PC-3 (cell line): ENCODE measurements at regions of chr3 and their contacts with region 1.

Region 1: DNA sequence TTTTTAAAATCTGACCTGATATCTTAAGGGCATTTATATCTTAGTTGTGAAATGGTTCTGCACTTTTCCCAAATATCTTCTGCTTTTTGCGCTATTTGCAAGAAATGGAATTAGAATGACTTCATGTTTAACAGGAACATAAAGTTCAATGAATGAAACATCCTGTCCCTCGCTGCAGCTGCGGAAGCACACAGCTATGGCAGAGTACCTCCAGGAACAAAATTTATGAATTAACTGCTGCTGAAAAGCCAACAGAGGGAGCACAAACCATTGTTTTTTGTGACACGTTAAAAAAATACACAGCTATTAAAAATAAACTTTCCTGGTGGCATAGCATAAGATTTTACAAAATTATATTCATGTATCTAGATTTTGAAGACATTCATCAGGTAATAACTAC is 404.4 kb upstream of the MDFIC2 start:
- DNase-seq: peak; percentile 55
- ATAC-seq: peak; percentile 88
- H3K4me3 ChIP-seq: no peak overlapping the region
- H3K27ac ChIP-seq: no peak overlapping the region
- H3K4me1 ChIP-seq: no peaks in the 10 kb centered on the region
- H3K27me3 ChIP-seq: no peaks in the 10 kb centered on the region
- CTCF ChIP-seq: peak; percentile 75

Region 2: DNA sequence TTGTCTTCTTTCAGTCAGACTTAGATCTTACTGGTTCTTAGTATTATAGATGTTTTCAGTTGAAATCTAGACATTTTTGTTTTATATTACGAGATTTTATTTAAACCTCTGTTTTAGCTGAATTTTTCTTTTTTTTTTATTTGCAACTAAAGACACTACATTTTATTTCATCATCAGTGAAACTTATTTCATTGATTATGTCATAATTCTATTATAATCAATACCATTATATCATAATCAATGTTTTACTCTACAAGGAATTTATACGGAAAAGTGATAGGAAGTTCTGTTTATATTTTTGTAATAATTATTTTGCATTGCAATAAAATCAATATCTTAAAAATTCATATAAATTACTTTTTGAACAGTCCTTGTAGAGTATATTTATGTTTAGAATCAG is 73.1 kb after region 1 on chr3:
- CTCF ChIA-PET with region 1: no interaction called
- POLR2A ChIA-PET with region 1: no interaction called
- intact Hi-C with region 1: no loop called
- DNase-seq: no peak
- ATAC-seq: no peak
- H3K4me3 ChIP-seq: no peak overlapping the region
- H3K27ac ChIP-seq: no peak overlapping the region
- H3K4me1 ChIP-seq: no peaks in the 10 kb centered on the region
- H3K27me3 ChIP-seq: no peaks in the 10 kb centered on the region
- CTCF ChIP-seq: no peak

Region 3: DNA sequence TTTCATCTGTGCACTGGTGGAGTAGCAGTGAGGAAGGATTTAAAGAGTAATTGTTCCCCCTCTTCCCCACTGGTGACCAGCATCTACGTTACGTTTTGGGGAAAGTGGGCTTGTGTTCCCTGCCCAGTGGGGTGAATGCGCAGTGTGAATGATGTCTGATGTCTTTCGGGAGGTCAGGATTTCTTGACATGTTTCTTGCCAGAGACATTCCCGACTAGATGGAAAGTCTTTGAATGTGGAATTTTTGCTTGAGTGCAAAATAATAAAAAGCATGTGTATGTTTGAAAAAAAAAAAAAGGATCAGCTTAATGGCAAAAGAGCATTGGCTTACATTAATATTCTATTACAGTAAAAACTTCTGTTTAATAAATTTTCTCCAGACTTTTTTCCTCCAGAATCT is 234.5 kb after region 1 on chr3:
- CTCF ChIA-PET with region 1: interaction called, 3 read pairs
- POLR2A ChIA-PET with region 1: no interaction called
- intact Hi-C with region 1: loop called (anchors 5 kb)
- DNase-seq: no peak
- ATAC-seq: no peak
- H3K4me3 ChIP-seq: no peak overlapping the region
- H3K27ac ChIP-seq: no peak overlapping the region
- H3K4me1 ChIP-seq: no peaks in the 10 kb centered on the region
- H3K27me3 ChIP-seq: no peaks in the 10 kb centered on the region
- CTCF ChIP-seq: no peak

Region 4: GRCh38 chr3:71069797-71070196 is 353.0 kb after region 1 on chr3:
- CTCF ChIA-PET with region 1: no interaction called
- POLR2A ChIA-PET with region 1: no interaction called
- intact Hi-C with region 1: loop called (anchors 5 kb)
- DNase-seq: peak; percentile 86
- ATAC-seq: peak; percentile 30
- H3K4me3 ChIP-seq: no peak overlapping the region
- H3K27ac ChIP-seq: no peak overlapping the region
- H3K4me1 ChIP-seq: peaks cover 40% of the 10 kb centered on the region
- H3K27me3 ChIP-seq: no peaks in the 10 kb centered on the region
- CTCF ChIP-seq: peak; percentile 93

Region 5: GRCh38 chr3:71103430-71103921 is 386.6 kb after region 1 on chr3:
- CTCF ChIA-PET with region 1: no interaction called
- POLR2A ChIA-PET with region 1: no interaction called
- intact Hi-C with region 1: no loop called
- DNase-seq: peak; percentile 79
- ATAC-seq: peak; percentile 7
- H3K4me3 ChIP-seq: no peak overlapping the region
- H3K27ac ChIP-seq: peak overlapping the region; percentile 74
- H3K4me1 ChIP-seq: peaks cover 54% of the 10 kb centered on the region
- H3K27me3 ChIP-seq: no peaks in the 10 kb centered on the region
- CTCF ChIP-seq: no peak